ENCODE measurements at regions of chr6 and their contacts with region 1.

Region 1: GRCh38 chr6:31186052-31186734 is 15.7 kb upstream of the POU5F1 start:
- DNase-seq: peak; percentile 83
- H3K4me3 Mint-ChIP-seq: peak overlapping the region; percentile 91
- H3K27ac Mint-ChIP-seq: peak overlapping the region; percentile 97
- H3K4me1 Mint-ChIP-seq: peaks cover 21% of the 10 kb centered on the region
- H3K27me3 Mint-ChIP-seq: no peaks in the 10 kb centered on the region
- CTCF ChIP-seq: no peak

Region 2: GRCh38 chr6:30463651-30464618 is 722.3 kb before region 1 on chr6:
- CTCF ChIA-PET with region 1: no interaction called
- intact Hi-C with region 1: no loop called
- DNase-seq: peak; percentile 53
- H3K4me3 Mint-ChIP-seq: no peak overlapping the region
- H3K27ac Mint-ChIP-seq: no peak overlapping the region
- H3K4me1 Mint-ChIP-seq: peaks cover 14% of the 10 kb centered on the region
- H3K27me3 Mint-ChIP-seq: peaks cover 100% of the 10 kb centered on the region
- CTCF ChIP-seq: no peak

Region 3: DNA sequence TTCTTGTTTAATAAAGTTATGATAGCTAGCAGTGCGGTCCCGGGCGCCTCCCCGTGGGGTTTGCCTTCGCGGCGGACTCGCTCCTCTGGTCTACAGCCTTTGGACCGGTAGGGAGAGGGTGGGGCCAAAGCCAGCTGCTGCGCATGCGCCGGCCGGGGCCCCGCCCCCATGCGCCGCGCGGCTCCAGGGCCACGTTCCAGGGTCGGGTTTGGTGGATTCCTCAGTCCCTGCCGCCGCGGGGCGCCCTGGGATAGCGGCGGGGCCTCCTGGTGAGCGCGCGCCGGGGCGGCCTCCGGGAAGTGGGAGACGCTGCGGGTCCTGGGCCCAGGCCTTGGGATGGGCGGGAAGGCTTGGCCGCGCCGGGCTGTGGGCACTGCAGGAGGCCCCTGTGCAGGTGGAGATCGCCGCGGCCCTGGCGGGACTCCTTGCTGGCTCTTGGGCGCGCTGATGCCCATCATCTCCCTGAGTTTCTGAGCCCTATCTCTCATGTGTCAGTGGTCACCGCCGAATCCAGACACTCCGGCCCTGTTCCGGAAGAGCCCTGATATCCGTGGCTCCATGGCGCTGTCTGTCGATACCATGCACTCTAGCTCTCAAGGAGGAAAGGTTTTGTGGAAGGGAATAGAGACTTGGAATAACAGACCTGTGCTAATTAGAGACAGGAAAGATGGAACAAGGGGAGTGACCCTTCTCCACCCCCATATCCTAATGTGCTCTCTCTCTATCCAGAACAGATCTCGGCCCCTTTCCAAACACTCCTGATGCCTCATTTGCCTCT is 271.9 kb before region 1 on chr6 and contains the start of gene VARS2:
- CTCF ChIA-PET with region 1: no interaction called
- intact Hi-C with region 1: no loop called
- DNase-seq: peak; percentile 100
- H3K4me3 Mint-ChIP-seq: peak within 1 kb of the TSS; percentile 78
- H3K27ac Mint-ChIP-seq: peak within 1 kb of the TSS; percentile 71
- H3K4me1 Mint-ChIP-seq: peaks cover 21% of the 10 kb centered on the region
- H3K27me3 Mint-ChIP-seq: no peaks in the 10 kb centered on the region
- CTCF ChIP-seq: peak; percentile 41
- total RNA-seq, gene VARS2: 33.0 and 34.2 TPM in 2 replicates

Region 4: GRCh38 chr6:31139599-31139998 is 46.6 kb before region 1 on chr6:
- CTCF ChIA-PET with region 1: interaction called, 10 read pairs
- intact Hi-C with region 1: no loop called
- DNase-seq: no peak
- H3K4me3 Mint-ChIP-seq: no peak overlapping the region
- H3K27ac Mint-ChIP-seq: no peak overlapping the region
- H3K4me1 Mint-ChIP-seq: peaks cover 29% of the 10 kb centered on the region
- H3K27me3 Mint-ChIP-seq: no peaks in the 10 kb centered on the region
- CTCF ChIP-seq: no peak

Region 5: GRCh38 chr6:31321820-31322219 is 135.6 kb after region 1 on chr6:
- CTCF ChIA-PET with region 1: no interaction called
- intact Hi-C with region 1: no loop called
- DNase-seq: no peak
- H3K4me3 Mint-ChIP-seq: no peak overlapping the region
- H3K27ac Mint-ChIP-seq: no peak overlapping the region
- H3K4me1 Mint-ChIP-seq: no peaks in the 10 kb centered on the region
- H3K27me3 Mint-ChIP-seq: peaks cover 85% of the 10 kb centered on the region
- CTCF ChIP-seq: peak; percentile 26